Activated CD8-positive, alpha-beta T cell treated with anti-CD3 and anti-CD28 coated beads for 36 hours (primary cell): ENCODE measurements at regions of chr17 and their contacts with region 1.

Region 1: GRCh38 chr17:43367737-43368242 is 31.0 kb upstream of the ARL4D start:
- DNase-seq: peak; percentile 68
- ATAC-seq: peak; percentile 64
- H3K4me3 Mint-ChIP-seq: peak overlapping the region; percentile 97
- H3K27ac Mint-ChIP-seq: peak overlapping the region; percentile 100
- H3K4me1 Mint-ChIP-seq: peaks cover 47% of the 10 kb centered on the region
- H3K27me3 Mint-ChIP-seq: no peaks in the 10 kb centered on the region
- CTCF ChIP-seq: no peak

Region 2: DNA sequence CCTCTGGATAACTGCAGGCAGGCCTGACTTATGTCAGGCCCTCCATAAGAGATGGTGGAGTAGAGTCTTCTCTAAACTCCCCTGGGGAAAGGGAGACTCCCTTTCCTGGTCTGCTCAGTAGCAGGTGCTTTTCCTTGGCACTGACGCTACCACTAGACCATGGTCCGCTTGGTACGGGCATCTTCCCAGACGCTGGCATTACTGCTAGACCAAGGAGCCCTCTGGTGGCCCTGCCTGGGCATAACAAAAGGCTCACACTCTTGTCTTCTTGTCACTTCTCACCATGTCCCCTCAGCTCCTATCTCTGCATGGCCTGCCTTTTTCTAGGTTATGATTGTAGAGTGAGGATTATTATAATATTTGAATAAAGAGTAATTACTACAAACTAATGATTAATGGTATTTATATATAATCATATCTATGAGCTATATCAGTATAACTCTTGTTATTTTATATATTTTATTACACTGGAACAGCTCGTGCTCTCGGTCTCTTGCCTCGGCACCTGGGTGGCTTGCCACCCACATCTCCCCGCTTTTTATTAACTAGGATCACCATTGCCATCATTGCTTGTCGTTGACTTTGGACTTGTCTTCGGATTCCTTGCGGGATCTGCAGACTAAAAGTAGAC is 28.8 kb before region 1 on chr17:
- CTCF ChIA-PET with region 1: interaction called, 3 read pairs
- POLR2A ChIA-PET with region 1: interaction called, 199 read pairs
- intact Hi-C with region 1: no loop called
- DNase-seq: peak; percentile 83
- ATAC-seq: no peak
- H3K4me3 Mint-ChIP-seq: no peak overlapping the region
- H3K27ac Mint-ChIP-seq: no peak overlapping the region
- H3K4me1 Mint-ChIP-seq: peaks cover 41% of the 10 kb centered on the region
- H3K27me3 Mint-ChIP-seq: no peaks in the 10 kb centered on the region
- CTCF ChIP-seq: peak; percentile 88

Region 3: GRCh38 chr17:43349142-43349541 is 18.6 kb before region 1 on chr17:
- CTCF ChIA-PET with region 1: no interaction called
- POLR2A ChIA-PET with region 1: interaction called, 199 read pairs
- intact Hi-C with region 1: no loop called
- DNase-seq: no peak
- ATAC-seq: no peak
- H3K4me3 Mint-ChIP-seq: no peak overlapping the region
- H3K27ac Mint-ChIP-seq: no peak overlapping the region
- H3K4me1 Mint-ChIP-seq: peaks cover 9% of the 10 kb centered on the region
- H3K27me3 Mint-ChIP-seq: peaks cover 4% of the 10 kb centered on the region
- CTCF ChIP-seq: no peak

Region 4: DNA sequence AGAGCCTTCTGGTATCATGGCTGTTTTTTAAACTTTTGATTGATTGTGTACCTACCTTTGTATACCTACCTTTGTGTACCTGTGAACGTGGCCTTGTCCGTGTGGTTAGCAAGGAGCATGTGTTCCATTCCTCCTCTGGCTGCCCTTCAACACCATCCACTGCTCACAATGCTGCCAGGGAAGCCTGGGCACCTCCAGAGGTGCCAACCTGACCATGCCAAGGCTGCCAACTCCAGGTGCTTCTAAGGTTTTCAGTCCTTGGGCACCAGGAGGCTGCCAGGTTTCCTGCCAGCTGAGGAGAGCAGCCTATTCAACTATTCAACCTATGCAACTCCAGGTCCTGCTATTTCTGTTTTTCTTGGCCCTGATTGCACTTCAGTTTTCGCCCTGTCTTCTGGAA is 13.4 kb after region 1 on chr17:
- CTCF ChIA-PET with region 1: interaction called, 4 read pairs
- POLR2A ChIA-PET with region 1: interaction called, 138 read pairs
- intact Hi-C with region 1: no loop called
- DNase-seq: no peak
- ATAC-seq: no peak
- H3K4me3 Mint-ChIP-seq: no peak overlapping the region
- H3K27ac Mint-ChIP-seq: no peak overlapping the region
- H3K4me1 Mint-ChIP-seq: no peaks in the 10 kb centered on the region
- H3K27me3 Mint-ChIP-seq: no peaks in the 10 kb centered on the region
- CTCF ChIP-seq: no peak

Region 5: DNA sequence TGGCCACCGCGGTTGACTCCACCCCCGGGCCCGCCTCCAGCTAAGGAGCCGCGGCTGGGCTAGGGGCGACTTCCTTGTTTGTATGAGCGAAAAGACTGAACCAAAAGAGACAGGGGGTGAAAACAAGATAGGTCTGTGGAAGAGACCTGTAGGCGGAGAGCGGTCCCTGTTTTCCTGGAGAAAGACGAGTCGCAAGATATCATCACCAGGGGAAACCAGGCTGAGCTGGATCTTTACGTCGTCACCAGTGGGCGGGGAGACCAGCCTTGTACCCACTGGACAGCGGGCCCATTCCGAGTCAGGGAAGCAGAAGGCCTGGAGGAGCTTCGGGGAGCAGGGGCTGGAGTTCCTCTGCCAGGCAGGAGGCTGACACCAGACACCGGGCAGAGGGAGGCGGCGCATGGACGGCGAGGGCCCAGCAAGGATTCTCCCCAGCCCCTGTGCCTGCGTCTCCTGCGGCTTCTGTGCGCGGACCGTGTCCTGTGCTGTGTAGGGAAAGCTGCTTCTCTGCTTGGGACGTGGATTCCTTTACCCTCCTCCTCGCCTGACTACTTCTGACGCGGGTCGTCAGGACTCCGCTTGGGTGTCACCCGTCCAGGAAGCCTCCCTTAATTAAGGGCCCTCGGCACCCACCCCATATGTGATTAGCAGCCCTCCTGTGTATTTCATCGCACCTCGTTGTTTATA is 20.7 kb after region 1 on chr17:
- CTCF ChIA-PET with region 1: interaction called, 30 read pairs
- POLR2A ChIA-PET with region 1: interaction called, 138 read pairs
- intact Hi-C with region 1: loop called (anchors 2 kb)
- DNase-seq: peak; percentile 94
- ATAC-seq: peak; percentile 76
- H3K4me3 Mint-ChIP-seq: peak overlapping the region; percentile 82
- H3K27ac Mint-ChIP-seq: peak overlapping the region; percentile 99
- H3K4me1 Mint-ChIP-seq: peaks cover 5% of the 10 kb centered on the region
- H3K27me3 Mint-ChIP-seq: no peaks in the 10 kb centered on the region
- CTCF ChIP-seq: no peak

Region 6: DNA sequence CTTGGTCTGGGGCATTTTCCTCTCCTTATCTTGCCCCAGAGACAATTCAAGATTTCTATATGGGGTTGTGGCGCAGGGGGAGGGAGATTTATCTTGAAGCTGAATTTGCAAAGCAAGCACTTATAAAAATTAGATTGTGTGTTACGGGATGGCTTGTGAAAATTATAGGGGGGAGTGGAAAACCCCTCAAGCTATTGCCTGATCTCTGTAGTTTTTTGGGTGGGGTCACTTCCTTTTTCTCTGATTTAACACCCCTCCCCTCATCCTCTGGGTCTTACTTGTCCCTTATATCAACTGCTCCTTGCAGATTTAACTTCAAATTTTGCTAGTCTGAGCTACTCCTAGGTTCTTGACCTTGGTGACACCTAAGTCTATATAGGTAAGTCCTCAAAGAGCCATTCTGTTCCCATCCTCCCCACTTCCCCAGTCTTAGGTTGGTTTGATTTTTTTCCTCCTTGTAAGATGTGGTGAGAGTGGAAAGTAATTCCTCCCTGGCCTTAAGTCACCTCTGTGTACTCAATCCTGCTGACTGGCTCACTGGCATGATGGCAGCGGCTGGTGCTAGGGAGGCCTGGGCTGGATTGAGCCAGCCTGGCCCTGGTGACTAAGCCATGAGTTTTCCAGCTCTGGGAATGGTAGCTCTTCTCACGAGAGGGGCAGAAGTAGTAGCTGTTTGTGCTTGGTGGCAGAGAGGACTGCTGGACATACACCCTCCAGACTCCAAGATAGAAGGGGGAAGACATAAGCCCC is 33.3 kb after region 1 on chr17:
- CTCF ChIA-PET with region 1: interaction called, 5 read pairs
- POLR2A ChIA-PET with region 1: interaction called, 16 read pairs
- intact Hi-C with region 1: no loop called
- DNase-seq: no peak
- ATAC-seq: no peak
- H3K4me3 Mint-ChIP-seq: no peak overlapping the region
- H3K27ac Mint-ChIP-seq: no peak overlapping the region
- H3K4me1 Mint-ChIP-seq: peaks cover 19% of the 10 kb centered on the region
- H3K27me3 Mint-ChIP-seq: no peaks in the 10 kb centered on the region
- CTCF ChIP-seq: no peak

Region 7: DNA sequence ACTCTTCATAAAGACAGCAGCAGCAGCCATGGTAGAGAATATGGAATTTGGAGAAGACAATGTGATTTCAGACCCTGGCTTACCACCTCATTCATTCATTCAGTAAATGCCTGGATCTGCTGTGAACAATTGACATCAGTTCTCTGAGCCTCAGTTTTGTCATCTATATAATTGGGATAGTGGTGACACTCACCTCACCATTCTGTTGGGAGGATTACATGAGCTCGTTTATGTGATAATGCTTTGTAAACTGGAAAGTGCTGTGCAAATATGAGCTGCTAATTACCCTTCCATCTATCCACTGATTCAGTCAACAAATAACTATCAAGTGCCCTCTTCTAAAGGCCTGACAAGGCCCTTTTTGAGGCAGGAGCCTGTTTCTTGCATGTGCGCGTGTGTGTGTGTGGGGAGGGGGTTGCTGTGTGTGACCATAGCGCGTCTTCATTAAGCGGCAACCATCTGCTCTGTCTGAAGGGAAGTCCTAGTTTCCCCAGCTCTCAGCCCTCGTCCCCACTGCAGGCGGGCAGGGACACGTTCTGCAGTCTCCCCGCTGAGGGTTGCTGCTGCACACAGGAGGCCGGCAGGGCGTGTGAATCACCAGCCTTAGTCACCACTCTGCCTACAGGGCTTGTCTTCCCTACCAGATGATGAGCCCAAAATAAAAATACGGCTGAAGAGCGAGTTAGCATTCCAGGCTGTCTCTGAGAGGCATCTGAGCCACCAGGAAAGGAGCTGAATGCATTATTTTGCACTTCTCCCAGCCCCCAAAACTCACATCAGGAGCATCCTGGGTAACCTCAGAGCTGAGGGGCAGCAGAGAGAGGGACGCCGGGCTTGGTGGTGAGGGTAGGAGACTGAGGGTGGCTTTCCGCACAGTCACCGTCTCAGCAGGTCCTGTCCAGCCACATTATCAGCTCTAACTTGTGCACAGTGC is 50.9 kb after region 1 on chr17:
- CTCF ChIA-PET with region 1: no interaction called
- POLR2A ChIA-PET with region 1: no interaction called
- intact Hi-C with region 1: no loop called
- DNase-seq: peak; percentile 23
- ATAC-seq: peak; percentile 58
- H3K4me3 Mint-ChIP-seq: no peak overlapping the region
- H3K27ac Mint-ChIP-seq: no peak overlapping the region
- H3K4me1 Mint-ChIP-seq: no peaks in the 10 kb centered on the region
- H3K27me3 Mint-ChIP-seq: peaks cover 5% of the 10 kb centered on the region
- CTCF ChIP-seq: no peak

Region 8: GRCh38 chr17:43517615-43518386 is 150.0 kb after region 1 on chr17:
- CTCF ChIA-PET with region 1: no interaction called
- POLR2A ChIA-PET with region 1: no interaction called
- intact Hi-C with region 1: no loop called
- DNase-seq: peak; percentile 14
- ATAC-seq: peak; percentile 71
- H3K4me3 Mint-ChIP-seq: no peak overlapping the region
- H3K27ac Mint-ChIP-seq: peak overlapping the region; percentile 60
- H3K4me1 Mint-ChIP-seq: peaks cover 10% of the 10 kb centered on the region
- H3K27me3 Mint-ChIP-seq: no peaks in the 10 kb centered on the region
- CTCF ChIP-seq: no peak